MCF 10A (cell line): ENCODE measurements at regions of chr20 and their contacts with region 1.

Region 1: DNA sequence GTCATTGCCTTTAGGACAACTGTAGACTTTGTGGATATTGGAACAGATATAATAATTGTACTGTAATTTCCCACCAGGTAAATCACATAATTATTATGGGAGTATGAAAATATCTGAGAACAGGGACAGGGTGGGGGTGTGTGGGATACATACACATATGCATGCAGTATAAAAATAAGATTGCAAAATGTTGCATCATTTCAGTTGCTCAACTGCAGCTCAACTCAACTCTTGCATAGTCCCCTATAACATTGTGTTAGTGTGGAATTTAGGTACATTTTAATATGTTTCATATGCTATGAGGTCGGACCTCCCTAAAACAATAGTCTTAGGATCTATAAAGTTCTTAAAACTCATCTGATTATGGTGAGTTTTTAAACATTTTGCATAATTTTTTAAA is 275.0 kb upstream of the FLRT3 start:
- DNase-seq: peak; percentile 69
- H3K4me3 Mint-ChIP-seq: no peak overlapping the region
- H3K27ac Mint-ChIP-seq: no peak overlapping the region
- H3K4me1 Mint-ChIP-seq: peaks cover 11% of the 10 kb centered on the region
- H3K27me3 Mint-ChIP-seq: no peaks in the 10 kb centered on the region
- CTCF ChIP-seq: no peak

Region 2: DNA sequence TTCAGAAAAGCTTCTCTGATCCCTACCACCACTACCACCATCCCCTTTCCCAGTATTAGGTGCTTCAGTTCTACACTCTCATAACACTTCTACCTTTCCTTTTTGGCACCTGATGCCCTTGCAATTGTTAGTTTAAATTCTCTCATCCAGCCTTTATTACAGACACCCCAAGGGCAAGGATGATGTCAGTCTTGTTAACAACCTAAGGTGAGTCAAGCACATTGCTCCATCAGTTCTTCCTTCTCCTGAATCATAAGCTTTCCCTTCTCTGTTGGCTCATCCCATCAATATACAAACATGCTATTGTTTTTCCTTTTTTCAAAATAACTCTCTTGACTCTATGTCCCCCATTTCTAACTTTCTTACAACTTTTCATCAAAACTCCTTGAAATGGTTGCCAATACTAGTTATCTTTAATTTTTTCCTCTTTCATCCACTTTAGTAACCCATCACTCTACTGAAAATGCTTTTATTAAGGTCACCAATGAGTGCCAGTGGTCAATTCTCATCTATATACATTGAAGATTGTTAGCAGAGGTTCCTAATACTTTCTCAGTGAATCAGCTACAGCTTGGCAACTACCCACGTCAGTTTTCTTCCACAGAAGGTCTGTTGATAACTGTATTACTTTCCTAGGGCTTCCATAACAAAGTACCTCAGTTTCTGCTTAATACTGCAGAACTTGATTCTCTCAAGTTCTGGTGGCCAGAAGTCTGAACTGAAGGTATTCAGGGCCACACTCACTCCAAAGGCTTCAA is 177.8 kb before region 1 on chr20:
- CTCF ChIA-PET with region 1: no interaction called
- POLR2A ChIA-PET with region 1: interaction called, 3 read pairs
- intact Hi-C with region 1: loop called (anchors 10 kb)
- DNase-seq: peak; percentile 96
- H3K4me3 Mint-ChIP-seq: no peak overlapping the region
- H3K27ac Mint-ChIP-seq: peak overlapping the region; percentile 3
- H3K4me1 Mint-ChIP-seq: peaks cover 14% of the 10 kb centered on the region
- H3K27me3 Mint-ChIP-seq: no peaks in the 10 kb centered on the region
- CTCF ChIP-seq: no peak